PC-3 (cell line): ENCODE measurements at regions of chr2 and their contacts with region 1.

Region 1: GRCh38 chr2:220277445-220278007 is 650.1 kb downstream of the SLC4A3 start:
- DNase-seq: peak; percentile 97
- ATAC-seq: peak; percentile 67
- H3K4me3 ChIP-seq: no peak overlapping the region
- H3K27ac ChIP-seq: peak overlapping the region; percentile 96
- H3K4me1 ChIP-seq: peaks cover 94% of the 10 kb centered on the region
- H3K27me3 ChIP-seq: no peaks in the 10 kb centered on the region
- CTCF ChIP-seq: no peak

Region 2: GRCh38 chr2:220043155-220043989 is 234.2 kb before region 1 on chr2:
- CTCF ChIA-PET with region 1: no interaction called
- POLR2A ChIA-PET with region 1: no interaction called
- intact Hi-C with region 1: no loop called
- DNase-seq: peak; percentile 27
- ATAC-seq: peak; percentile 48; the same call in 1 of the 2 replicates
- H3K4me3 ChIP-seq: no peak overlapping the region
- H3K27ac ChIP-seq: no peak overlapping the region
- H3K4me1 ChIP-seq: peaks cover 12% of the 10 kb centered on the region
- H3K27me3 ChIP-seq: no peaks in the 10 kb centered on the region
- CTCF ChIP-seq: no peak

Region 3: GRCh38 chr2:220053919-220054318 is 223.6 kb before region 1 on chr2:
- CTCF ChIA-PET with region 1: no interaction called
- POLR2A ChIA-PET with region 1: no interaction called
- intact Hi-C with region 1: loop called (anchors 5 kb)
- DNase-seq: peak; percentile 70
- ATAC-seq: no peak; the same call in 1 of the 2 replicates
- H3K4me3 ChIP-seq: no peak overlapping the region
- H3K27ac ChIP-seq: no peak overlapping the region
- H3K4me1 ChIP-seq: no peaks in the 10 kb centered on the region
- H3K27me3 ChIP-seq: no peaks in the 10 kb centered on the region
- CTCF ChIP-seq: peak; percentile 79

Region 4: GRCh38 chr2:220165401-220165800 is 112.1 kb before region 1 on chr2:
- CTCF ChIA-PET with region 1: no interaction called
- POLR2A ChIA-PET with region 1: no interaction called
- intact Hi-C with region 1: loop called (anchors 5 kb)
- DNase-seq: peak; percentile 58
- ATAC-seq: peak; percentile 51
- H3K4me3 ChIP-seq: no peak overlapping the region
- H3K27ac ChIP-seq: no peak overlapping the region
- H3K4me1 ChIP-seq: peaks cover 12% of the 10 kb centered on the region
- H3K27me3 ChIP-seq: no peaks in the 10 kb centered on the region
- CTCF ChIP-seq: peak; percentile 47

Region 5: GRCh38 chr2:220228299-220229006 is 49.1 kb before region 1 on chr2:
- CTCF ChIA-PET with region 1: no interaction called
- POLR2A ChIA-PET with region 1: no interaction called
- intact Hi-C with region 1: loop called (anchors 2 kb)
- DNase-seq: peak; percentile 96
- ATAC-seq: peak; percentile 68
- H3K4me3 ChIP-seq: peak overlapping the region; percentile 44; the same call in 1 of the 2 replicates
- H3K27ac ChIP-seq: peak overlapping the region; percentile 97
- H3K4me1 ChIP-seq: peaks cover 70% of the 10 kb centered on the region
- H3K27me3 ChIP-seq: no peaks in the 10 kb centered on the region
- CTCF ChIP-seq: no peak

Region 6: DNA sequence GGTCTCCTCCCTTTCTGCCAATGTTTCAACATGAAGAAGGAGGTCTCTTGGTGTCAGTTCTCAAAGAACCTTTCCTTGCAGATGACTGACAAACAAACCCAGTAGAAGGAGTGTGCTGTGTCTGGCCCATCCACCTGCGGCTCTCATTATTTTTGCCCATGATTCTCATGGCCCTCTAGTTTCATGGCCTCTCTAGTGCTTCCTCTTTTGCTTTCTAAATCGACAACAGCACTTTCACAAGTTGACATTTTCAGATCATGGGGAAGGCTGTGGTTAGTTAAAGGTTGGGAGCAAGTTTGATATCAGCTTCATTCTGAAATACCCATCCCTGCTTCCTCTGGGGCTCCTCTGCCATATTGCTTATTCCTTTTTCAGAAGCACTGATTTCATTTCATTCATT is 155.1 kb after region 1 on chr2:
- CTCF ChIA-PET with region 1: no interaction called
- POLR2A ChIA-PET with region 1: no interaction called
- intact Hi-C with region 1: no loop called
- DNase-seq: no peak
- ATAC-seq: no peak
- H3K4me3 ChIP-seq: no peak overlapping the region
- H3K27ac ChIP-seq: no peak overlapping the region
- H3K4me1 ChIP-seq: peaks cover 18% of the 10 kb centered on the region
- H3K27me3 ChIP-seq: no peaks in the 10 kb centered on the region
- CTCF ChIP-seq: no peak

Region 7: GRCh38 chr2:220512419-220512818 is 234.9 kb after region 1 on chr2:
- CTCF ChIA-PET with region 1: interaction called, 6 read pairs
- POLR2A ChIA-PET with region 1: no interaction called
- intact Hi-C with region 1: loop called (anchors 5 kb)
- DNase-seq: peak; percentile 74
- ATAC-seq: peak; percentile 30; the same call in 1 of the 2 replicates
- H3K4me3 ChIP-seq: peak overlapping the region; percentile 25; the same call in 1 of the 2 replicates
- H3K27ac ChIP-seq: peak overlapping the region; percentile 76
- H3K4me1 ChIP-seq: peaks cover 48% of the 10 kb centered on the region
- H3K27me3 ChIP-seq: no peaks in the 10 kb centered on the region
- CTCF ChIP-seq: no peak